Activated T-helper 2 cell treated with anti-CD3 and anti-CD28 coated beads, Interferon-gamma antibody, Interleukin-2, Interleukin-4, amounts not matched to agents 10 μg/mL and 5 μg/mL and 100 μg/mL, durations not matched to agents 14 hours and 24 hours and 36 hours (primary cell): ENCODE measurements at regions of chr11 and their contacts with region 1.

Region 1: DNA sequence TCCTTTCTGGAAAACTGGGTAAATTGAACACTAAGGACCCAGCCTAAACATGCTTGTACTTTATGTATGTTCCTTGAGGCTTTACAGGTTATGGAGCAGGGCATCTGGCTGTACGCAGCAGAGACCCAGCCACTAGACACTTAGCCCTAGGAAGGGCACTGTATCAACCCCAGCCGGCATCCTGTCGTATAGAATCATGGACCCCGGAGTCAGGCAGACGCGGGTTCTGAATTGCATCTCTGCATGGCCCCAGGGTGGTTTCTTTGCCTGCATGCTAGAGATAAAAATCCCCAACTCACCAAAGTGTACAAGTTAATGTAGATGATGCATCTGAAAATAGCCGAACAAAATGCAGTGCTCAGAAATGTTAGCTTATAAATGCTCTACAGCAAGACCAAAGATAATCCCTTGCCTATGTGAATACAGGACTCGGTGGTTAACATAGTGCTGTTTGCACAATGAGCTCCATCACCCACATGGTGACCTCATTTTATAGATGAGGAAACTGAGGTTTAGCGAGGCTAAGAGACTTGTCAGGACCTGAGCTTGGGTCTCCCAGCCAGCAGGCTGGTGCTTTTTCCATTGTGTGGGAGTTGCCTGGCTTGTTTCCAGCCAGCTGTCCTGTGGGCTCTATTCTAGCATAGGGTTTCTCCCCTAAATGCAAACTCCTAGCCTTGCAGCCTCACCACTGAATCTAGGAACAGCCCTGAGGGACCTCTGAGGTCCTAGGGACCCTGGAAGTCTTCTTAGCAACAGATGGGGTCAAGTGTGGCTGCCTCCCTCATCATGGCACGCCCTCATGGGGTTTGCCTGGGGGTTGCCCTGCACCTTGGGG is 7.3 kb downstream of the CD6 start:
- DNase-seq: no peak
- H3K4me3 Mint-ChIP-seq: peak overlapping the region; percentile 85
- H3K27ac Mint-ChIP-seq: peak overlapping the region; percentile 89
- H3K4me1 Mint-ChIP-seq: peaks cover 72% of the 10 kb centered on the region
- H3K27me3 Mint-ChIP-seq: no peaks in the 10 kb centered on the region

Region 2: GRCh38 chr11:60821827-60822599 is 156.8 kb before region 1 on chr11:
- intact Hi-C with region 1: no loop called
- DNase-seq: no peak
- H3K4me3 Mint-ChIP-seq: no peak overlapping the region
- H3K27ac Mint-ChIP-seq: no peak overlapping the region
- H3K4me1 Mint-ChIP-seq: no peaks in the 10 kb centered on the region
- H3K27me3 Mint-ChIP-seq: peaks cover 12% of the 10 kb centered on the region

Region 3: DNA sequence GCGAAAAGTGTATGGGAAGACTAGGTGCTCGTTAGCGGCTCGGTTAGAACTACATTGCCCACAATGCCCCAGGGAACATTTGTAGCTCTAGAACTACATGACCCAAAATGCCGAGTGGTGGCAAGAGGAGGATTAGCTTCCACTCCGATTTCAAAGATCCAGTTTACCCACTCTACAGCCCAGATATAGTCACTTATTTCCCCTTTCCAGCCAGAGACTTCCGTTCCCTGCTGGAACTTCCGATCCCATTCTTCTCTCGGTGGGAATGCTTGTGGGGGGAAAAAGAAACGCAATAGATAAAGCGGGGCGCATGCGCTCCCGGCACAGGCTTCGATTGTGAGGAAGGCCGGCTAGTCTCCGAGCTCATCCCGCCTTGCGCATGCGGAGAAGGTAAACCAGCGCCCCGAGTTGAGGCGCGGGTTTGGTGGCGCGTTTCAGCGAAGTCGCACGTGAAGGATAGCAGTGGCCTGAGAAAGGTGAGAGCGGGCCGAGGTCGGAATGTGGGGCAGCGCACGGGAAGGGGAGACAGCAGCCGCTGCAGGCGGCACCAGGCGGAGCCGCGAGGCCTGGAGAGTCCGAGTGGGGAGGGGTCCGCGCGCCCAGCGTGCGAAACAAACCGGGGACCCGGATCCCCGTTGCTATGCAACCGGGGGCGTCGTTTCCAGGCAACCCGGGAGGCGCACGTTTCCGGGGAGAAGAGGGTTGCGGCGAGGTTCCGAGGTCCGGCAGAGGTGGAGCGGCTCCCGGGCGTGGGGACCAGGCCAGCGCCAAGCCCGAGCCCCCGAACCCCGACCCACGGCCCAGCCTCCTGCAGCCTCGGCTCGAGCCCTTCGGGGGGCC is 64.8 kb before region 1 on chr11 and contains the start of gene TMEM109:
- intact Hi-C with region 1: loop called (anchors 2 kb)
- DNase-seq: peak; percentile 85
- H3K4me3 Mint-ChIP-seq: peak within 1 kb of the TSS; percentile 99
- H3K27ac Mint-ChIP-seq: peak within 1 kb of the TSS; percentile 99
- H3K4me1 Mint-ChIP-seq: peaks cover 56% of the 10 kb centered on the region
- H3K27me3 Mint-ChIP-seq: peaks cover 4% of the 10 kb centered on the region
- total RNA-seq, gene TMEM109: 112 and 120 TPM in 2 replicates

Region 4: DNA sequence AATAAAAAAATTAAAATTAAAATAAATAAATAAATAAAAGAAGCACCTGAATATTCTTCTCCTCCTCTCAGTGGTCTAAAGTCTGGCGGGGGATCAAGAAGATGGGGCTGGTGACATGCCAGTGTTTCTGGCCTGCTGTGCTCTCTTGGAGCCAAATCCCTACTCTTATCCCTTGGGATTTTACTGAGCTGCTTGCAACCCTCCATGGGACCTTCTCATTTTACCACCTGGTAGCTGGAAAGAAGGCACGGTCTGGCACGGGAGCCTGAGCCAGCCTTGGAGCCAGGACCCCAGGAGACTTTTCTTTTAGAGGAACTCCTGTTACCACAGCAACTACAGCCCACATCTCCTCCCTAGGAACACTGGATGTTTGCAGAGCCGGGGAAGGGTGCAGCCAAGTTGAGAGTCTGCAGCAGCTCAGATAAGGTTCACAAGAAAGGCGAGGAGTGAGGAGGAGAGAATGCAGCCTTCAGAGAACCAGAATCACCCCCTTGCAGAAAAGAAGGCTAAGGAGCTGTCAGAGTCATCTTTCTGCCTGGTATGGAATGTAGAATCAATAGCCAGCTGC is 14.2 kb after region 1 on chr11:
- intact Hi-C with region 1: loop called (anchors 1 kb)
- DNase-seq: no peak
- H3K4me3 Mint-ChIP-seq: peak overlapping the region; percentile 68
- H3K27ac Mint-ChIP-seq: peak overlapping the region; percentile 92
- H3K4me1 Mint-ChIP-seq: peaks cover 65% of the 10 kb centered on the region
- H3K27me3 Mint-ChIP-seq: no peaks in the 10 kb centered on the region